Transverse colon (tissue), 4 donors: ENCODE measurements at regions of chr2 and their contacts with region 1.

Region 1: GRCh38 chr2:218832520-218832919 is 917 bp upstream of the PRKAG3 start:
- DNase-seq: no peak
- H3K4me3 ChIP-seq: no peak overlapping the region
- H3K27ac ChIP-seq: no peak overlapping the region
- H3K4me1 ChIP-seq: no peaks in the 10 kb centered on the region
- H3K27me3 ChIP-seq: peaks cover 45% of the 10 kb centered on the region
- CTCF ChIP-seq: no peak
- EP300 ChIP-seq: no peak
- POLR2A ChIP-seq: no peak

Region 2: DNA sequence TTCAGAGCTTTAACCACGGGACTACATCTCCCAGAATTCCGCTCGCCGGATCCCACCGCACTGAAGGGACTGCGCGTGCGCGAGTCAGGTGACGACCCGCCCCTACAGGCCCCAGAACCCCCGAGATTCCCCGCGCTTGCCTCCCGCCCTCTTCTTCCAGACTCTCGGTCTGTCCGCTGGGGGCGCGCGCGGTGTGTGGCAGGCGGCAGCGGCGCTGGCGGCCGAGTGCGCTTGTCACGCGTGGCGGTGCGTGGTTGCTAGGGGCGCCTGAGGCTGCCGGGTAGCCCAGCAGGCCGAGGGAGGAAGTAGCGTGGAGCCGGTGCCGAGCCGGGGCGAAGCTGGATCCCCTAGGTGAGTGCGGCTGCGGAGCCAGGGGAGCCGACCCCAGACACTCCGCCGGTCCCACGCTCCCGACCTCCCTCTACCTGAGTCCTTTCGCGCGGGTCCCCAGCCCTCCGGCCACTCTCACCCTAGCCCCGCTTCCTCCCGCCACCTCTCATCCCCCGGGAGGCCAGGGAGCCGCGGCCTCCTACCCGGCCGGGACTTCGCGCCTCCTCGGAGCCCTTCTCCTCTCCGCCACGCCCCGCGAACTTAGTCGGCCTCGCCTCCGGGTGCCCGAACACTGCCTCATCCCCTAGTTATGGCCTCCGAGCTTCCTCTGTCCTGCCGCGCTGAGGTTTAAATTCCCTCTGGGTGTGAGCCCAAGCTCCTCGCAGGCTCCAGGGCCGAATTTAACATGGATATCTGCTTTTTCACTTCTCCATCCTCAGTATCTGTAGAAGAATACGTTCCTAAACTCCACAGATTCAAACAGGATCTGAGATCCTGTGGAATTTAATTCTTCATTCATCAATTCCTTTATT is 121.6 kb before region 1 on chr2 and contains the start of gene TTLL4:
- in situ Hi-C with region 1: loop called in 1 of 4 experiments (anchors 25 kb)
- intact Hi-C with region 1: no loop called
- DNase-seq: peak; percentile 98
- H3K4me3 ChIP-seq: peak within 1 kb of the TSS; percentile 56 to 83 (median 77)
- H3K27ac ChIP-seq: peak within 1 kb of the TSS; percentile 90 to 95 (median 93)
- H3K4me1 ChIP-seq: peaks cover 0 to 19% (median 11%) of the 10 kb centered on the region in 4 donors
- H3K27me3 ChIP-seq: no peaks in the 10 kb centered on the region
- CTCF ChIP-seq: peak; percentile 76 to 98 (median 90)
- EP300 ChIP-seq: no peak
- POLR2A ChIP-seq: peak; percentile 68
- total RNA-seq, gene TTLL4: 6.0 to 26.0 (median 15.9) TPM

Region 3: GRCh38 chr2:218727502-218728165 is 104.9 kb before region 1 on chr2:
- in situ Hi-C with region 1: loop called (anchors 10 to 25 kb)
- intact Hi-C with region 1: loop called (anchors 10 kb)
- DNase-seq: no peak
- H3K4me3 ChIP-seq: no peak overlapping the region
- H3K27ac ChIP-seq: no peak overlapping the region
- H3K4me1 ChIP-seq: peaks cover 3 to 18% (median 15%) of the 10 kb centered on the region in 4 donors
- H3K27me3 ChIP-seq: no peaks in the 10 kb centered on the region
- CTCF ChIP-seq: peak; percentile 35 to 48 (median 38)
- EP300 ChIP-seq: no peak
- POLR2A ChIP-seq: no peak

Region 4: DNA sequence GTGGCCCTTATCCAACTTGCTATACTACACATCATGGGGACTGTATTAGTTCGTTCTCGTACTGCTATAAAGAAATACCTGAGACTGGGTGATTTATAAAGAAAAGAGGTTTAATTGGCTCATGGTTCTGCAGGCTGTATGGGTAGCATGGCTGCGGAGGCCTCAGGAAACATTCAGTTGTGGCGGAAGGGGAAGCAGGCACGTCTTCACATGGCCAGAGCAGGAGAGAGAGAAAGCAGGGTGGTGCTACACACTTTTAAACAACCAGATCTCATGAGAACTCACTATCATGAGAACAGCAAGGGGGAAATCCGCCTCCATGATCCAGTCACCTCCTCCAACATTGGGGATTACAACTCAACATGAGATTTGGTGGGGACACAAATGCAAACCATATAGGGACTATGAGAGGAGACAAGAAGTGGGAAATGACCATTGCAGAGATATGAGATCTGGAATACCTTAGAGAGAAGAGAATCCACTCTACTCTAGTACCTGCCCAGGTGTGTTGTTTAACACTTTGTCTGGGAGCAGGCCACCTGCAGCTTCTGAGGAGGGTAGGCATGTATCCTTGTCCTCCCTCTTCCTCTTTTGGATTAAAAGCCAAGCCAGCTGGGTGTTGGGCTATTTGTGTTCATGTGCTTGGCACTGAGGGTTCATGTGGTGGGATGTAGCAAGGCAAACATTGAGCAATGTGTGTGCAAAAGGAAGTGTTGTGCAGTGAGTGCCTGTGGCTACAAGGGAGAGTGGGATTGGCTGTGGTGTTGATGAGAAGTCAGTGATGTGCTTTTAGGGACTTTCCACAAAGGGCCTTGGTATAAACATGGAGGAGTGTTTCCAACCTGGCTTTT is 99.1 kb before region 1 on chr2:
- in situ Hi-C with region 1: loop called in 3 of 4 experiments (anchors 10 to 25 kb)
- intact Hi-C with region 1: loop called (anchors 10 kb)
- DNase-seq: peak; percentile 12
- H3K4me3 ChIP-seq: no peak overlapping the region
- H3K27ac ChIP-seq: peak overlapping the region in 3 of 4 donors; percentile 9 to 64 (median 16)
- H3K4me1 ChIP-seq: peaks cover 3 to 33% (median 20%) of the 10 kb centered on the region in 4 donors
- H3K27me3 ChIP-seq: no peaks in the 10 kb centered on the region
- CTCF ChIP-seq: no peak
- EP300 ChIP-seq: no peak
- POLR2A ChIP-seq: no peak

Region 5: DNA sequence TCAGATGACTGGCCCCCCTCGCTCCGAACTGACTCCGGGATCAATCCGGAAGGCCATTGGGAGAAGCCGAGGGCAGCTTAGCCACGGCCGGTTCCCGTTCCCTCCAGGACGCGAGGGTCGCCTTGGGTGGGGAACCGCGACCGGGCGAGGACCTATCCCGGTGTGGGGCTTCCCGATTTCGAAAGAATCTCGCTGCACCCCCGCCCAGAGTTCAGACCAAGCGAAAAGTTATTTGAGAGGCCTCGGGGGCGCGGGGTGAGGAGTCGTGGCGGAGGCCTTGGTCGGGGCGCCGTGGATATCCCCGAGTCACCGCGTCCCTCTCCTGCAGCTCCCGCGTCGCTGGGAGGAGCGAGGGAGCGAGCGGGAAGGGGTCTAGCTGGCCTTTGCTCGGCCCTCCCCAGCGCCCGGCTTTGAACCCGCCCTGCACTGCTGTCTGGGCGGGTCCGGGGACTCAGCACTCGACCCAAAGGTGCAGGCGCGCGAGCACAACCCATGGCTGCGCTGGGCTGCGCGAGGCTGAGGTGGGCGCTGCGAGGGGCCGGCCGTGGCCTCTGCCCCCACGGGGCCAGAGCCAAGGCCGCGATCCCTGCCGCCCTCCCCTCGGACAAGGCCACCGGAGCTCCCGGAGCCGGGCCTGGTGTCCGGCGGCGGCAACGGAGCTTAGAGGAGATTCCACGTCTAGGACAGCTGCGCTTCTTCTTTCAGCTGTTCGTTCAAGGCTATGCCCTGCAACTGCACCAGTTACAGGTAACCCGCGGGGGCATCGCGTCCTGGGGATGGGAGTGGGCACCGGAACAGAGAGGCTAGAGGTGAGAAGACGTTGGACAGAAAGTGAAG is 50.6 kb before region 1 on chr2 and contains the start of gene CYP27A1:
- in situ Hi-C with region 1: no loop called
- intact Hi-C with region 1: no loop called
- DNase-seq: peak; percentile 70
- H3K4me3 ChIP-seq: peak within 1 kb of the TSS; percentile 64 to 81 (median 70)
- H3K27ac ChIP-seq: peak within 1 kb of the TSS; percentile 75 to 89 (median 84)
- H3K4me1 ChIP-seq: peaks cover 10 to 39% (median 18%) of the 10 kb centered on the region in 4 donors
- H3K27me3 ChIP-seq: no peaks in the 10 kb centered on the region
- CTCF ChIP-seq: no peak
- EP300 ChIP-seq: no peak
- POLR2A ChIP-seq: peak; percentile 60
- total RNA-seq, gene CYP27A1: 48.3 to 159 (median 75.5) TPM

Region 6: GRCh38 chr2:219521066-219521880 is 688.8 kb after region 1 on chr2:
- in situ Hi-C with region 1: no loop called
- intact Hi-C with region 1: no loop called
- DNase-seq: peak; percentile 21
- H3K4me3 ChIP-seq: no peak overlapping the region
- H3K27ac ChIP-seq: peak overlapping the region in 3 of 4 donors; percentile 70 to 81 (median 73)
- H3K4me1 ChIP-seq: peaks cover 8 to 18% (median 11%) of the 10 kb centered on the region in 4 donors
- H3K27me3 ChIP-seq: peaks cover 78% of the 10 kb centered on the region
- CTCF ChIP-seq: peak; percentile 37 to 57 (median 48)
- EP300 ChIP-seq: no peak
- POLR2A ChIP-seq: no peak